Activated naive CD4-positive, alpha-beta T cell treated with anti-CD3 and anti-CD28 coated beads for 36 hours (primary cell): ENCODE measurements at regions of chr9 and their contacts with region 1.

Region 1: DNA sequence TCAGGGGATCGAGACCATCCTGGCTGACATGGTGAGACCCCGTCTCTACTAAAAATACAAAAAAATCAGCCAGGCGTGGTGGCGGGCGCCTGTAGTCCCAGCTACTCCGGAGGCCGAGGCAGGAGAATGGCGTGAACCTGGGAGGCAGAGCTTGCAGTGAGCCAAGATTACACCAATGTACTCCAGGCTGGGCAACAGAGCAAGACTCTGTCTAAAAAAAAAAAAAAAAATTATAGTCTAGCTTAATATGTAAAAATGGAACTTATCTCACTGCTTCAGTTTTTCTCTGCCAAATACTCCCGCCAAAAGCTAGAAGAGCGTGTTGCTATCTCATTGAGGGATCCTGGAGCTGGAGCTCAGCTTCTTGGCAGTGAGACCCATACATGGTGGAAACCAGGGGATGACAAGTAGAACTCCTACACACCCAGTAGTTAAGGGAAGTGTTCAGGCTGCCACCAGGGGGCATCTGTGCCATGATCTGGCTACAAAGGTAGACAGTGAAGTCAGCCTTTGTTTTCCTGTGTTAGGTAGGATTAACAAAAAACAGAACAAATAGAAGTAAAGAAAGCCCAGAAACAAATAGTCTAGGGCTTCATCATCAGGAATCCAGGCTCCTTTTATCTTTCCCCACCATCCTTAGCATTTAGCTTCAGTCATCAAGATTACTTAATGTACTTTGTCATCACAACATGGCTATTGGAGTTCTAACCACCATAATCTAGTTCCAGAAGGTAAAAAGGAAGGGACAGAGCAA is 33.6 kb upstream of the GLIPR2 start:
- DNase-seq: peak; percentile 95
- H3K4me3 Mint-ChIP-seq: no peak overlapping the region
- H3K27ac Mint-ChIP-seq: peak overlapping the region; percentile 34
- H3K4me1 Mint-ChIP-seq: peaks cover 6% of the 10 kb centered on the region
- H3K27me3 Mint-ChIP-seq: no peaks in the 10 kb centered on the region

Region 2: GRCh38 chr9:35993976-35994720 is 108.8 kb before region 1 on chr9:
- CTCF ChIA-PET with region 1: no interaction called
- intact Hi-C with region 1: no loop called
- DNase-seq: no peak
- H3K4me3 Mint-ChIP-seq: no peak overlapping the region
- H3K27ac Mint-ChIP-seq: no peak overlapping the region
- H3K4me1 Mint-ChIP-seq: no peaks in the 10 kb centered on the region
- H3K27me3 Mint-ChIP-seq: peaks cover 5% of the 10 kb centered on the region

Region 3: GRCh38 chr9:36008774-36009300 is 94.1 kb before region 1 on chr9:
- CTCF ChIA-PET with region 1: interaction called, 13 read pairs
- intact Hi-C with region 1: no loop called
- DNase-seq: peak; percentile 74
- H3K4me3 Mint-ChIP-seq: no peak overlapping the region
- H3K27ac Mint-ChIP-seq: no peak overlapping the region
- H3K4me1 Mint-ChIP-seq: peaks cover 22% of the 10 kb centered on the region
- H3K27me3 Mint-ChIP-seq: peaks cover 5% of the 10 kb centered on the region

Region 4: GRCh38 chr9:36125062-36125855 is 22.3 kb after region 1 on chr9:
- CTCF ChIA-PET with region 1: interaction called, 42 read pairs
- intact Hi-C with region 1: no loop called
- DNase-seq: peak; percentile 24
- H3K4me3 Mint-ChIP-seq: no peak overlapping the region
- H3K27ac Mint-ChIP-seq: no peak overlapping the region
- H3K4me1 Mint-ChIP-seq: peaks cover 15% of the 10 kb centered on the region
- H3K27me3 Mint-ChIP-seq: no peaks in the 10 kb centered on the region

Region 5: GRCh38 chr9:36148311-36149051 is 45.6 kb after region 1 on chr9:
- CTCF ChIA-PET with region 1: interaction called, 20 read pairs
- intact Hi-C with region 1: loop called (anchors 1 kb)
- DNase-seq: peak; percentile 69
- H3K4me3 Mint-ChIP-seq: no peak overlapping the region
- H3K27ac Mint-ChIP-seq: no peak overlapping the region
- H3K4me1 Mint-ChIP-seq: peaks cover 82% of the 10 kb centered on the region
- H3K27me3 Mint-ChIP-seq: no peaks in the 10 kb centered on the region

Region 6: DNA sequence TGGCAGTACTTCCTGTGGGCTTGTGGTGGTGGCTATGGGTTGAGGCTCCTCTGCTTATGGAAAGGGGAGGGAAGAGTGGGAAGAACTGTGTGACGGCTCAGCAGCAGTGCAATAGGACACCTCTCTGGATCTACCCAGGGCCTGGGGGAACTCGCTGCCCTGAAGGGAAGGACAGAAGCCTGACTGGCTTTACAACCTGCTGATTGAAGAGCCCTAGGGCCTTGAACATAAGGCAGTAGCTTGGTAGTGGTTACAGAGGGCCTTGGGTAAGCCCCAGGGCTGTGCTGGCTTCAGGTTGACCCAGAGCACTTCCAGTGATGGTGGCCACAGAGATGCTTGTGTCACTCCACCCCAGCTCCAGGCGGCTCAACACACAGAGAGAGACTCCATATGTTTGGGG is 71.8 kb after region 1 on chr9:
- CTCF ChIA-PET with region 1: interaction called, 283 read pairs
- intact Hi-C with region 1: no loop called
- DNase-seq: no peak
- H3K4me3 Mint-ChIP-seq: no peak overlapping the region
- H3K27ac Mint-ChIP-seq: no peak overlapping the region
- H3K4me1 Mint-ChIP-seq: no peaks in the 10 kb centered on the region
- H3K27me3 Mint-ChIP-seq: no peaks in the 10 kb centered on the region

Region 7: DNA sequence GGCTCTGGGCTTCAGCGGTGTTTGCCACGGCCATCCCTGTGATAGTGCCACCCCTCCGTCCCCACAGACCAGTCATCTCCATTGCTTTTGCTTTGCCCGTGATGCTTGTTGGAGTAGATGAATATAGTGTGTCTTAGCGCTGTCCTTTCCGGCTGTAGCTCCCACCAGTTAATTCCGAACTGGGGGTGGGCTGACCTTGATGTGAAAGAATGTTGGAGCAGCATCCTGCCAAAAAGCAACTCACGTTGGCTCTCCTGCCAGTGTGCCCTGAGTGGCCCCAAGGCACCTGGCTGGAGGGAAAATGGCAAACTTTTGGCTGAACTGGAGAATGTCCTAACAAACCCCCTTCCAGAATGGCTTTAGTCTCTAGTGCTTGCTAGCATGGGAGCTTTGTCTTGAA is 107.8 kb after region 1 on chr9:
- CTCF ChIA-PET with region 1: no interaction called
- intact Hi-C with region 1: no loop called
- DNase-seq: no peak
- H3K4me3 Mint-ChIP-seq: no peak overlapping the region
- H3K27ac Mint-ChIP-seq: no peak overlapping the region
- H3K4me1 Mint-ChIP-seq: peaks cover 53% of the 10 kb centered on the region
- H3K27me3 Mint-ChIP-seq: no peaks in the 10 kb centered on the region

Region 8: GRCh38 chr9:36487482-36488388 is 384.8 kb after region 1 on chr9:
- CTCF ChIA-PET with region 1: no interaction called
- intact Hi-C with region 1: no loop called
- DNase-seq: peak; percentile 87
- H3K4me3 Mint-ChIP-seq: peak overlapping the region; percentile 90
- H3K27ac Mint-ChIP-seq: peak overlapping the region; percentile 98
- H3K4me1 Mint-ChIP-seq: peaks cover 61% of the 10 kb centered on the region
- H3K27me3 Mint-ChIP-seq: no peaks in the 10 kb centered on the region